AG04449 (cell line): ENCODE measurements at regions of chr11 and their contacts with region 1.

Region 1: GRCh38 chr11:59560702-59561469 is 49.5 kb downstream of the OR4D9 start:
- DNase-seq: no peak
- H3K4me3 ChIP-seq: peak overlapping the region; percentile 94
- CTCF ChIP-seq: no peak

Region 2: GRCh38 chr11:59615637-59616395 is 54.9 kb after region 1 on chr11 and contains the start of gene OSBP:
- CTCF ChIA-PET with region 1: interaction called, 5 read pairs
- POLR2A ChIA-PET with region 1: interaction called, 13 read pairs
- DNase-seq: peak; percentile 100
- H3K4me3 ChIP-seq: peak within 1 kb of the TSS; percentile 92
- CTCF ChIP-seq: peak; percentile 11